Spleen (tissue), 13 donors: ENCODE measurements at regions of chr16 and their contacts with region 1.

Region 1: DNA sequence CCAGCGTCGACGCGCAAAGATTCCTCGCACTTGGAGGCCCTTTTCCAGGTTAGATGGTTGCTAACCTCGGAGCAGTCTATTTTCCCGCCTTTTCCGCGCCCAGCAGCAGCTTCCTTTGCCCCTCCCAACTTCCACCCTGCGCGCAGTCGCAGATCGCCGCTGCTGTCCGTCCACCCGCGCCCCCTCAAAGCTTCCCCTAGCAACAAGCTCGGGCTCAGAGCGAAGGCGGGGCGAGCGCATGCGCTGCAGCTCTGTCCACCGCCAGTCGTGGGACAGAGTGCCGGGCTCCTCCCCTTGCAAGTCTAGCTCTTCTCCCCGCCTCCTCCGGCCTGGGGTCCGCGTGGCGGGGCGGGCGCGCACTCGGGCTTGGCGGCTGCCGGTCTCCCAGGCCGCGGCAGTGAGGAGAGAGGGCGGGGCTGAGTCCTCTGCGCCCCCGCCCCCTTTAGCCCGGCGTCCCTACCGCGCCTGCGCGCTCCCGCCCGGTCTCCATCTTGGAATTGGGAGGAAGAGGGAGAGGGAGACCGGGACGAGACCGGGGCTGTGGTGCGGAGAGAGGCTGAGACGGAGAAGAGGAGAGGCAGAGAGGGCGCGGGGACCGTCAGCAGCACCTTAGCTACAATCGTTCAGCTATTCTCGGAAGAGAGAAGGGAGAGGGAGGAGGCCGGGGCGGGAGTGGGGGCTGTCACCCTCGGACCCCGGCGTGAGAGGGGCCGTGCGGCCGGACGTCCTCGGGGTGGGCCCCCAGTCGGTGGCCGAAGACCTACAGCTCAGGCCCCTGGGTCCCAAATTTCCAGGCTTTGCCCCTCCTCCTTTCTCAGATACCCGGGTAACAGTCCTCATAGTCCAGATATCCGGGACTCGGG is at the start of gene TAOK2:
- DNase-seq: peak; percentile 100
- H3K4me3 ChIP-seq: peak within 1 kb of the TSS; percentile 76 to 99 (median 94)
- H3K27ac ChIP-seq: peak within 1 kb of the TSS; percentile 91 to 96 (median 95)
- H3K4me1 ChIP-seq: peaks cover 23 to 60% (median 44%) of the 10 kb centered on the region in 6 donors
- H3K27me3 ChIP-seq: no peaks in the 10 kb centered on the region
- CTCF ChIP-seq: peak in 1 of 11 experiments; percentile 36
- POLR2A ChIP-seq: peak in 2 of 3 donors; percentile 48 to 50
- total RNA-seq, gene TAOK2: 60.0 to 96.5 (median 78.6) TPM

Region 2: GRCh38 chr16:29995911-29996772 is 22.5 kb after region 1 on chr16 and contains the start of gene INO80E:
- intact Hi-C with region 1: loop called (anchors 2 kb)
- DNase-seq: peak; percentile 100
- H3K4me3 ChIP-seq: peak within 1 kb of the TSS; percentile 57 to 99 (median 84)
- H3K27ac ChIP-seq: peak within 1 kb of the TSS; percentile 78 to 97 (median 94)
- H3K4me1 ChIP-seq: peaks cover 18 to 46% (median 33%) of the 10 kb centered on the region in 6 donors
- H3K27me3 ChIP-seq: no peaks in the 10 kb centered on the region
- CTCF ChIP-seq: peak in 5 of 11 experiments; percentile 5 to 54 (median 49)
- POLR2A ChIP-seq: peak in 1 of 3 donors; percentile 55
- total RNA-seq, gene INO80E: 62.6 to 89.5 (median 72.6) TPM

Region 3: GRCh38 chr16:30032083-30032819 is 58.6 kb after region 1 on chr16:
- intact Hi-C with region 1: no loop called
- DNase-seq: no peak
- H3K4me3 ChIP-seq: no peak overlapping the region
- H3K27ac ChIP-seq: no peak overlapping the region
- H3K4me1 ChIP-seq: peaks cover 0 to 21% (median 12%) of the 10 kb centered on the region in 6 donors
- H3K27me3 ChIP-seq: peaks cover 7 to 94% (median 58%) of the 10 kb centered on the region in 7 donors
- CTCF ChIP-seq: peak in 10 of 11 experiments; percentile 33 to 84 (median 70)
- POLR2A ChIP-seq: no peak